A549 (cell line): ENCODE measurements at regions of chr5 and their contacts with region 1.

Region 1: DNA sequence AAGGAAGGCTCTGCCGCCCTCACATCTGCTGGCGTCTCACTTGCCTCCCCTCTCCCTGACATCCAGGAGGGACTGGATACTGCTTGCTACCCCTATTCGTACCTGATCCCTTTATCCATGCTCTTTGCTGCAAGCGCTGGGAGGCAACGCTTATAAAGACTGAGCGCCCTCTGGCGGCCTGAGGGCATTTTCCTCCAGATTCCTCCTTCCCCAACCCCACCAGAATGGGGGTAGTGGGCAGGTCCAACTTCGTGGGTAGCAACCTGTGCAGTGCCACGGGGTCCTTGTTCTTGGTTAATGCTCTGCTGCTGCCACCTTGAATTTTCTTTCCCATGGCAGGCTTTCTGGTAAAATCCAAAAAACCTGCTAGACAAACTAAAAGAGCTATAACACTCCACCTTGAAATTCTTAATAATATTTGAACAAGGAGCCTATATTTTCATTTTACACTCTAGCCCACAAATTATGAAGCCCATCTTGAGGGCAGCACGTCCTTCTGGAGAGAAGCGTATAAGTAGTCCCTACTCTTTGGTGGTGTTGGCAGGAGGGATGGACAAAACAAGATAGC is 52.4 kb downstream of the JADE2 start:
- DNase-seq: peak; percentile 77 to 86
- ATAC-seq: peak; percentile 77 to 85
- H3K4me3 ChIP-seq: no peak overlapping the region
- H3K27ac ChIP-seq: peak overlapping the region; percentile 39 to 65; a peak in 4 of 6 replicates
- H3K4me1 ChIP-seq: peaks cover 20% of the 10 kb centered on the region
- CTCF ChIP-seq: peak; percentile 85
- EP300 ChIP-seq: no peak
- POLR2A ChIP-seq: no peak
- RAD21 ChIP-seq: peak; percentile 87 to 90

Region 2: GRCh38 chr5:134304311-134304710 is 273.6 kb before region 1 on chr5:
- CTCF ChIA-PET with region 1: interaction called, 48 read pairs
- POLR2A ChIA-PET with region 1: no interaction called
- DNase-seq: no peak
- ATAC-seq: no peak
- H3K4me3 ChIP-seq: no peak overlapping the region
- H3K27ac ChIP-seq: no peak overlapping the region
- H3K4me1 ChIP-seq: no peaks in the 10 kb centered on the region
- CTCF ChIP-seq: no peak
- EP300 ChIP-seq: no peak
- POLR2A ChIP-seq: no peak
- RAD21 ChIP-seq: no peak

Region 3: GRCh38 chr5:134541736-134542376 is 36.0 kb before region 1 on chr5:
- CTCF ChIA-PET with region 1: interaction called, 19 read pairs
- POLR2A ChIA-PET with region 1: no interaction called
- DNase-seq: no peak
- ATAC-seq: peak; percentile 45 to 56; a peak in 4 of 6 replicates
- H3K4me3 ChIP-seq: no peak overlapping the region
- H3K27ac ChIP-seq: no peak overlapping the region
- H3K4me1 ChIP-seq: 0 out of 3 replicates have a peak, but pooled peaks cover 2% of the 10 kb centered on the region
- CTCF ChIP-seq: no peak
- EP300 ChIP-seq: no peak
- POLR2A ChIP-seq: no peak
- RAD21 ChIP-seq: no peak

Region 4: DNA sequence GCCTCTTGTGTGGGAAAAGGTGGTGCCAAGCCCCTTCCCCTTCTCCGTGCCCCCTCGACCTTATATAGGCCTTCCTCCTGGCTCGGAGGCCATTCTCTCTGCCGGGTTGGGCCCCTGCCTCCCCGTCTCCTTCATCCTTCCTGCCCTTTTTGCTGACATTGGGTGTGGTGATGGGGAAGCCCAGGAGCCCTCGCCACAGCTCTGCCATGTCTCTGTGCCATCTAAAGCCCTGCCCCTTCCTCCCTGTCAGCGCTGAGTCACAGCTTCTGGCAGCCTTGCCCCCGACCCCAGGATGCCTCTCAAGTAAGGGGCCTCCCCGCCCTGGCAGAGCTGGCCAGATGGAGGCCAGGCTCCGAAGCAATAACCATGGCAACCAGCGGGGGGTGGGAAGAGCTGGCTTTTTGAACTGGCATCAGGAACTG is 22.0 kb before region 1 on chr5:
- CTCF ChIA-PET with region 1: interaction called, 56 read pairs
- POLR2A ChIA-PET with region 1: no interaction called
- DNase-seq: peak; percentile 90 to 92
- ATAC-seq: peak; percentile 57 to 78
- H3K4me3 ChIP-seq: no peak overlapping the region
- H3K27ac ChIP-seq: peak overlapping the region; percentile 79 to 88
- H3K4me1 ChIP-seq: peaks cover 62% of the 10 kb centered on the region
- CTCF ChIP-seq: no peak
- EP300 ChIP-seq: no peak
- POLR2A ChIP-seq: no peak
- RAD21 ChIP-seq: 0 out of 5 replicates have a peak, but pooled peaks of 1 of the 2 experiments have one; percentile 7

Region 5: DNA sequence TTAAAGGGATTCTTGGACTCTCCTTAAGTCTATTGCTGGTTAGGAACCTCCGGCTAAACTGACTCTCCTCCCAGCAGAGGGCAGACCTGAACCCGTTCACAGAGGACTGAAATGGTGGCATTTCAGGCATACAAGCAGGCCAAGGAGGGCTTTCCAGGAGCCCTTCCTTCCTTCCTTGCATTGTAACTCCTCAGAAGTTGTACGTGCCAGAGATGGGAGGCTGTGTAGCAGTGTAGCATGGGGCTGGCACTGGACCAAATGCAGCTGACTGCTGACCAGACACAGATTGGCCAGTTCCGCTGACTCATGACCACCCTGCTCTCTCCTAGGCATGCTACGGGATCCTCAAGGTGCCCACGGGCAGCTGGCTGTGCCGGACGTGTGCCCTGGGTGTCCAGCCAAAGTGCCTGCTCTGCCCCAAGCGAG is 16.0 kb before region 1 on chr5:
- CTCF ChIA-PET with region 1: interaction called, 56 read pairs
- POLR2A ChIA-PET with region 1: no interaction called
- DNase-seq: peak; percentile 48 to 53
- ATAC-seq: peak; percentile 62 to 81; a peak in 5 of 6 replicates
- H3K4me3 ChIP-seq: no peak overlapping the region
- H3K27ac ChIP-seq: peak overlapping the region; percentile 29 to 75; a peak in 3 of 6 replicates
- H3K4me1 ChIP-seq: peaks cover 14% of the 10 kb centered on the region
- CTCF ChIP-seq: peak; percentile 37; the same call in 2 of the 3 replicates
- EP300 ChIP-seq: no peak
- POLR2A ChIP-seq: no peak
- RAD21 ChIP-seq: peak; percentile 20 to 41; a peak in 3 of 5 replicates

Region 6: GRCh38 chr5:134592141-134592746 is 14.4 kb after region 1 on chr5:
- CTCF ChIA-PET with region 1: interaction called, 25 read pairs
- POLR2A ChIA-PET with region 1: no interaction called
- DNase-seq: no peak
- ATAC-seq: peak in 1 of 2 experiments; percentile 25; a peak in 3 of 6 replicates
- H3K4me3 ChIP-seq: no peak overlapping the region
- H3K27ac ChIP-seq: peak overlapping the region; percentile 46 to 77
- H3K4me1 ChIP-seq: peaks cover 15% of the 10 kb centered on the region
- CTCF ChIP-seq: no peak
- EP300 ChIP-seq: no peak
- POLR2A ChIP-seq: no peak
- RAD21 ChIP-seq: no peak

Region 7: GRCh38 chr5:134692722-134693121 is 114.8 kb after region 1 on chr5:
- CTCF ChIA-PET with region 1: no interaction called
- POLR2A ChIA-PET with region 1: no interaction called
- DNase-seq: no peak
- ATAC-seq: no peak
- H3K4me3 ChIP-seq: no peak overlapping the region
- H3K27ac ChIP-seq: no peak overlapping the region
- H3K4me1 ChIP-seq: no peaks in the 10 kb centered on the region
- CTCF ChIP-seq: no peak
- EP300 ChIP-seq: no peak
- POLR2A ChIP-seq: no peak
- RAD21 ChIP-seq: no peak

Region 8: GRCh38 chr5:134769206-134769605 is 191.3 kb after region 1 on chr5:
- CTCF ChIA-PET with region 1: no interaction called
- POLR2A ChIA-PET with region 1: no interaction called
- DNase-seq: peak in 1 of 2 experiments; percentile 13
- ATAC-seq: peak in 1 of 2 experiments; percentile 58; a peak in 1 of 6 replicates
- H3K4me3 ChIP-seq: no peak overlapping the region
- H3K27ac ChIP-seq: no peak overlapping the region
- H3K4me1 ChIP-seq: no peaks in the 10 kb centered on the region
- CTCF ChIP-seq: no peak
- EP300 ChIP-seq: no peak
- POLR2A ChIP-seq: no peak
- RAD21 ChIP-seq: no peak